Aorta (tissue), 5 donors: ENCODE measurements at regions of chr7 and their contacts with region 1.

Region 1: GRCh38 chr7:3880228-3880987 is 579.4 kb downstream of the SDK1 start:
- DNase-seq: no peak
- ATAC-seq: no peak
- H3K4me3 ChIP-seq: no peak overlapping the region
- H3K27ac ChIP-seq: no peak overlapping the region
- H3K4me1 ChIP-seq: no peaks in the 10 kb centered on the region
- H3K27me3 ChIP-seq: no peaks in the 10 kb centered on the region

Region 2: DNA sequence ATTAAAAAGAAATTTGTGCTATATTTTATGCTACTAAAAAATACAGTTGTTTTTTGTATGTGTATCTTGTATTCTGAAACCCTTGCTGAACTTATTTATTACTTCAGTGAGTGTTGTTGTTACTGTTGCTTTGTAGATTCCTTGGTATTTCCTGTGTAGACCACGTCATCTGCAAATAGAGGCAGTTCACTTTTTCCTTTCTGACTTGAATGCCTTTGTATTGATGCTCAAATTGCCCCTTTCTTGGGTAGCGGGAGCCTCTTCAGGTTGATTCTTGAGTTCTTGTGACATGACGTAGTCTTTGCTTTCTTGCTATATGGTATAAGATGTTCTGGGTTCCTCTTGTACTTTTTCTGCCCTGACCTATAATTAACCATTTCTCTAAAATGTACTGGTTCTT is 75.3 kb before region 1 on chr7:
- intact Hi-C with region 1: loop called in 1 of 2 experiments (anchors 2 kb)
- DNase-seq: no peak
- ATAC-seq: no peak
- H3K4me3 ChIP-seq: no peak overlapping the region
- H3K27ac ChIP-seq: no peak overlapping the region
- H3K4me1 ChIP-seq: no peaks in the 10 kb centered on the region
- H3K27me3 ChIP-seq: no peaks in the 10 kb centered on the region

Region 3: GRCh38 chr7:3835109-3835508 is 45.3 kb before region 1 on chr7:
- intact Hi-C with region 1: no loop called
- DNase-seq: no peak
- ATAC-seq: no peak
- H3K4me3 ChIP-seq: no peak overlapping the region
- H3K27ac ChIP-seq: no peak overlapping the region
- H3K4me1 ChIP-seq: no peaks in the 10 kb centered on the region
- H3K27me3 ChIP-seq: no peaks in the 10 kb centered on the region